ENCODE measurements at regions of chr9 and their contacts with region 1.

Region 1: GRCh38 chr9:9598723-9599122 is 1014.1 kb downstream of the PTPRD start:
- DNase-seq: no peak
- H3K4me3 ChIP-seq: no peak overlapping the region
- H3K27ac ChIP-seq: no peak overlapping the region
- H3K4me1 ChIP-seq: no peaks in the 10 kb centered on the region
- H3K27me3 ChIP-seq: no peaks in the 10 kb centered on the region
- CTCF ChIP-seq: no peak

Region 2: GRCh38 chr9:9942764-9943424 is 344.2 kb after region 1 on chr9:
- intact Hi-C with region 1: loop called (anchors 10 kb)
- DNase-seq: peak; percentile 63
- H3K4me3 ChIP-seq: no peak overlapping the region
- H3K27ac ChIP-seq: no peak overlapping the region
- H3K4me1 ChIP-seq: no peaks in the 10 kb centered on the region
- H3K27me3 ChIP-seq: no peaks in the 10 kb centered on the region
- CTCF ChIP-seq: peak; percentile 89